ENCODE measurements at regions of chr15 and their contacts with region 1.

Region 1: GRCh38 chr15:92803847-92804609 is 96.1 kb upstream of the CHD2 start:
- DNase-seq: peak; percentile 82 to 86
- ATAC-seq: peak; percentile 79 to 90 (median 84)
- H3K4me3 ChIP-seq: no peak overlapping the region
- H3K27ac ChIP-seq: peak overlapping the region; percentile 92
- H3K4me1 ChIP-seq: peaks cover 38% of the 10 kb centered on the region
- H3K27me3 ChIP-seq: no peaks in the 10 kb centered on the region
- CTCF ChIP-seq: no peak

Region 2: DNA sequence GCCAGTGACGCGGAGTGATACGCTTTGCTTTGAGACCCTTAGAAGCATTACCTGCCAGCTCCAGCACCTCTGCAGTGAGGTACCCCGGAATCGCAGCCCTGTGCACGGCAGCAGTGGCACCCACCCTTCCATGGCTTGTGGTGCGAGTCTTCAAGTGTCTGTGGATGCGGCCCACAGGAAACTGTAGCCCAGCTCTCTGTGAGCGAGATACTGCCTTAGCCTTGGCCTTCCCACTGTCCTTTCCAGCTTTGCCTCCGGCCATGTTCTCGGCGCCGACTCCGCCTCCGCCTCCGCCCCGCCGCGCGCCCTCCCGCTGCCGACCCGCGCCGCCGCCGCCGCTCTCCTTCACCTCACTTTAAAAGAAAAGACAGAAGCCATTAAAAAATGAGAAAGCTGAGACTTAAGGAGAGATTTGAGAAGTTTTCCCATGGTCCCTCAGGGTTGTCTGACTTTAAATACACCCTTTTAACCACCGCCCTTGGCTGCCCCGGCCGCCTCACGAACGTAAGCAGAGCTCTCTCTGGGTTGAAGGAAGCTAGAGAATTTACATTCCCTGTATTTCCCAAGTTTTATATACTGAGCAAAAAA is 70.0 kb before region 1 on chr15:
- intact Hi-C with region 1: no loop called
- DNase-seq: peak in 1 of 2 donors; percentile 20
- ATAC-seq: peak; percentile 37 to 87 (median 62)
- H3K4me3 ChIP-seq: peak overlapping the region; percentile 70
- H3K27ac ChIP-seq: peak overlapping the region; percentile 74
- H3K4me1 ChIP-seq: no peaks in the 10 kb centered on the region
- H3K27me3 ChIP-seq: no peaks in the 10 kb centered on the region
- CTCF ChIP-seq: no peak

Region 3: DNA sequence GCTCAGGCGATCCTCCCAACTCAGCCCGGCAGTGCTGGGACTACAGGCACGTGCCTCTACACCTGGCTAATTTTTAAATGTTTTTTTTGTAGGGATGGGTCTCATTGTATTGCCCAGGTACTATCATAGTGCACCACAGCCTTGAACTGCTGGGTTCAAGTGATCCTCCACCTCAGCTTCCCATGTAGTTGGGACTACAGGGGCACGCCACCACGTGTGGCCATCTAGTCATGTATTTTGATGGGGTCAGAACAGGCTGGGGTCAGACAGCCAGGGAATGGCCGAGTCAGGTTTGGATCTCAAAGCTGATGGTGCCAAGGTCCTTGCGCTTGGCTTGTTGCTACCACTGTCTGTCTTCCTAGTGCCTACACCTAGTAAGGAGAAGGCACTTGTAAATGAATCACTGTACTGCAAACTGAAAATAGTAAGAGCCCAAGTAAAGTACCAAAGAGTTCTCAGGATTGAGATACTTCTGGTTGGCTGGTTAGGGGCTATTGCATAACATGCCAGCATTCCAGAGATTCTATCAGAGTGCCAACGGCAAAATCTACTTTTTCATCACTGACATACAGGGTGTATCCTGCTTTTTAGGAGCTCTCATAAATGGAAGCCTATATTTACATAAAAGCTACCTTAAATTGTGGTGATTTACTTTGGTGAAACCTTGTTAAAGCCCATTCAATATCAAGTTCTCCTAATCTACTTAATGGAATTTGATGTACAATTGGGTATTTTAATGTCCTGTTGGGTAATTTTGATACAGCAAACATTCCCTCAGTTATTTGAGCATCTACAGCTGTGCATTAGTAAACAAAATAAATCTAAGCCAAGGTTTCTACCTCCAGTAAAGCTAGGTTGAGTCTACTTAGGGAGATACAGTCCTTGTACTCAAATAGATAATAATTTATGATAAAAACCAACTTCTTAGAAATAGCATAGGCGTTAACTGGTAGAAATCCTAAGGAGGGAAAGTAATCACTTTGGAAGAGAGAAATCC is 65.3 kb after region 1 on chr15:
- intact Hi-C with region 1: no loop called
- DNase-seq: no peak
- ATAC-seq: peak in 3 of 4 donors; percentile 27 to 85 (median 74)
- H3K4me3 ChIP-seq: no peak overlapping the region
- H3K27ac ChIP-seq: peak overlapping the region; percentile 13
- H3K4me1 ChIP-seq: peaks cover 12% of the 10 kb centered on the region
- H3K27me3 ChIP-seq: no peaks in the 10 kb centered on the region
- CTCF ChIP-seq: no peak

Region 4: GRCh38 chr15:93005133-93005532 is 201.1 kb after region 1 on chr15:
- intact Hi-C with region 1: loop called in 1 of 2 experiments (anchors 5 kb)
- DNase-seq: no peak
- ATAC-seq: peak; percentile 39 to 63 (median 45)
- H3K4me3 ChIP-seq: no peak overlapping the region
- H3K27ac ChIP-seq: peak overlapping the region; percentile 61
- H3K4me1 ChIP-seq: peaks cover 17% of the 10 kb centered on the region
- H3K27me3 ChIP-seq: no peaks in the 10 kb centered on the region
- CTCF ChIP-seq: no peak

Region 5: GRCh38 chr15:93467327-93467726 is 663.3 kb after region 1 on chr15:
- intact Hi-C with region 1: no loop called
- DNase-seq: peak; percentile 87 to 95
- ATAC-seq: peak; percentile 98 to 100 (median 100)
- H3K4me3 ChIP-seq: no peak overlapping the region
- H3K27ac ChIP-seq: peak overlapping the region; percentile 54
- H3K4me1 ChIP-seq: peaks cover 12% of the 10 kb centered on the region
- H3K27me3 ChIP-seq: no peaks in the 10 kb centered on the region
- CTCF ChIP-seq: no peak

Measured in psoas muscle (tissue), 8 donors.